RWPE1 (cell line): ENCODE measurements at regions of chr15 and their contacts with region 1.

Region 1: DNA sequence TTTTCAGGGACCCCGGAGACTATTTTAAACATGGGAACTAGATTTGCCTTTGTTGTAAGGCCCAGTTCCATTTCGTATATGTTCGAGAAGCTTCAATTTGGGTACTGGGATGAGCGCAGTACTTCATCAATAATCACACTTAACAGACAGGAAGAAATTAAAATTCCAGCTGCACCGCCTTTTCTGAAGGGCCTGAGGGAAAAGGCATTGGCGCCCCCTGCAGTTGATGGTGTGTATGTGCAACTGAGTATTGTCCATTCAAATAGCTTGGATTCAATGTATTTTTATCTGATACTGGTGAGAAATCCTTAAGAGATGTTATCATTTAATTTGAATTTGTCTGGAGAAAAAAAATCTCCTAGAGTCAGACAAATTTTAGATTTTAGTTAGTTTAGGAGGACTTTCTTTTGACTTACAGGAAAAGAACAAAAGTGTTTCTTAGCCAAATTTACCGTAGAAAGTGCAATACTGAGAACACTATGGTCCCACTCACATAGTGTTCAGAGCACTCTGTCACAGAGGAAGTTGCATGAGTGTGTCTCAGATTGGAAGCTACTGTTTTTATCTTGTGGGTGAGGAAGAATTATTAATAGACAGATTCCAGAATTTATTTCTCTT is 5.4 kb upstream of the ALDH1A2 start:
- DNase-seq: peak; percentile 41
- H3K27ac ChIP-seq: no peak overlapping the region
- CTCF ChIP-seq: peak; percentile 98

Region 2: GRCh38 chr15:57751177-57751800 is 319.6 kb before region 1 on chr15:
- CTCF ChIA-PET with region 1: interaction called, 14 read pairs
- POLR2A ChIA-PET with region 1: no interaction called
- DNase-seq: peak; percentile 47
- H3K27ac ChIP-seq: no peak overlapping the region
- CTCF ChIP-seq: peak; percentile 65

Region 3: DNA sequence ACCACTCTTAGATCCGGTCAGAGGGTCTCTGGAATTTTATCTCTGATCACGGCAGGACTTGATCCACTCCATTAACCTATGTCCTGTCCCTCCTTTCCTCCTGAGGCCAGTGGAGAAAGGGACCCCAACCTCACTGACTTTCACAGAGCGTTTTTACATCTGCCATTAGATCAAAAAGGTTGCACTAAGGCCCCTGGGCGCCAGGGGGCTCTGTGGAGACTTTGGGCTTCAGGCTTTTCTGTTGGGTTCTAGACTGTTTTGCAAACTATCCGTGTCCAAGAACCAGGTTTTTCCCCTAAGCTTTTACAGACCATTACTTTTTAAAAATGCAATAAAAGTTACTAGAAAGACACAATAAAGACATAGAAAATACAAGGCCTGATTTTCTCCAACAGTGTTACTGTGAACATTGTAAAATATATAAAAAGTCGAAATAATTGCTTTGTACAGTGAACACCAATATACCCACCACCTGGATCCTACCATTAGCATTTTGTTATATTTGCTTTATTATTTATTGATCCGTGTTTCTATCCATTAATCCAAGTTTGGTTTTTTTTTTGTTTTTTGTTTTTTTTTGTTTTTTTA is 204.7 kb before region 1 on chr15:
- CTCF ChIA-PET with region 1: interaction called, 30 read pairs
- POLR2A ChIA-PET with region 1: no interaction called
- DNase-seq: peak; percentile 60
- H3K27ac ChIP-seq: no peak overlapping the region
- CTCF ChIP-seq: peak; percentile 89

Region 4: DNA sequence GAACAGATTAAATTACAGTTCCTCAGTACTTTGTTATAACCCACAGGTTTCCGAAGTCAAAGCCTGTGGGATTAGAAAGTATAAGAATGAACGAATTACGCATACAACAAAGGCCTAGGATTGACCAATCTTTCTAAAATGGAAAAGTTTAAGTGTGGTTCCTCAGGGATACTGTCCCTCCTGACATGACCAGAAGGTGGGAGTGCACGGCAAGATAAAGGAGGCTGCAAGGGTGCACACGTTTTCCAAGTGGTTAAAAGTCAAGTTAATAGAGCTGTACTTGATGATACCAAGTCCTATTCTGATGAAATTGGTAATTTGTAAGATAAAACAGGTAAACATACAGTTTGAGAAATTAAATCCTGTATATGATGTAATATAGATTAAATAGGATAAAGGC is 101.6 kb before region 1 on chr15:
- CTCF ChIA-PET with region 1: interaction called, 38 read pairs
- POLR2A ChIA-PET with region 1: no interaction called
- DNase-seq: peak; percentile 57
- H3K27ac ChIP-seq: no peak overlapping the region
- CTCF ChIP-seq: peak; percentile 49

Region 5: GRCh38 chr15:58182460-58183163 is 111.7 kb after region 1 on chr15:
- CTCF ChIA-PET with region 1: interaction called, 10 read pairs
- POLR2A ChIA-PET with region 1: no interaction called
- DNase-seq: peak; percentile 70
- H3K27ac ChIP-seq: no peak overlapping the region
- CTCF ChIP-seq: peak; percentile 84

Region 6: GRCh38 chr15:58957101-58957973 is 886.4 kb after region 1 on chr15:
- CTCF ChIA-PET with region 1: no interaction called
- POLR2A ChIA-PET with region 1: no interaction called
- DNase-seq: peak; percentile 58
- H3K27ac ChIP-seq: no peak overlapping the region
- CTCF ChIP-seq: peak; percentile 91